Gastrocnemius medialis (tissue), 4 donors: ENCODE measurements at regions of chr14 and their contacts with region 1.

Region 1: GRCh38 chr14:77097700-77098528 is at the start of gene CIPC:
- DNase-seq: peak; percentile 100
- ATAC-seq: peak; percentile 70 to 72
- H3K4me3 ChIP-seq: peak within 1 kb of the TSS; percentile 71 to 90 (median 85)
- H3K27ac ChIP-seq: peak within 1 kb of the TSS; percentile 93 to 99 (median 98)
- H3K4me1 ChIP-seq: peaks cover 54 to 58% of the 10 kb centered on the region in 2 donors
- H3K27me3 ChIP-seq: no peaks in the 10 kb centered on the region
- CTCF ChIP-seq: no peak
- POLR2A ChIP-seq: peak; percentile 89 to 94
- total RNA-seq, gene CIPC: 114 to 178 (median 120) TPM

Region 2: DNA sequence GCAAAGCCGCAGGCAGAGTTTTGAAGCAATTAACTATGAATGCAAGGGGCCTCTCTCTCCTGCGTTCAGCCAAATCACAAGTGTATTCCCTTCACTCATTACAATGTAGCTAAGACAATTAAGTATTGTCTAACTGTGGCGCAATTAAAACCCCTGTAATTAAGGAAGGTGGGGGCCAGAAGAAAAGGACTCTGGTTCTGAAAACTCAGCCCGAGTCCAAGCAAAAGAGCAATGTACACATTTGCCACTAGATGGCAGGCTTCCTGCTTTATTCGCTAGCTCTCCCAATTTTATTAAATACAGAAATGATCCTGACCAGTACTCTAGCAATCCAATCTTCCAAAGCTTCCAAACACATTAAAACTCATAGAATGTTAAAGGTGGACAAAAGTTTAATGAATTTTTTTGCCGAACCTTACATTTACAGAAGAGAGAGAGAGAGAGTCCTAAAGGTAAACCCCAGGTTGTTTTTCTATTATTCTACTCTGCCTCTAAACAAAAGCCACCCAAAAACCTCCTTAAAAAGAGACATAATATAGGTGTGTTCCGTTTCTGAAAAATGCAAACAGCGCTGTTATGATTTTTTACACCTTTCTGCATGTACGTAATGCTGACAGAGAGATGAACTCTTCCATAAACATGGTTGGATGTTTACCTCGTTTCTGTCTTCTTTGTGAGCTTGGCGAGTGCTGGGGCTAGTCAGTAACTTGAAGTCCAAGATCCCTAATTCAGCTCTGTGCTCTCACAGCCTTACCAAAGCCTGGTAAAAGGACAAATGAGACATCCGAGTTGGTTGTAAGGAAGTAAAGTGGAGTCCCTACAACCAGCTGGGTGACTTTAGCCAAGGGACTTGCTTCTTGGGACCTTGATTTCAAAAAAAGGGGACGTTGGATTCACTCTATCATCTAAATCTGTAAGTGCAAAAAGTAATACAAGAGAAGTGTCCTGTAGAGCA is 387.6 kb before region 1 on chr14:
- in situ Hi-C with region 1: loop called in 1 of 4 experiments (anchors 25 kb)
- intact Hi-C with region 1: no loop called
- DNase-seq: no peak
- ATAC-seq: peak; percentile 54 to 58
- H3K4me3 ChIP-seq: no peak overlapping the region
- H3K27ac ChIP-seq: no peak overlapping the region
- H3K4me1 ChIP-seq: no peaks in the 10 kb centered on the region
- H3K27me3 ChIP-seq: no peaks in the 10 kb centered on the region
- CTCF ChIP-seq: peak; percentile 49 to 80 (median 70)
- POLR2A ChIP-seq: no peak

Region 3: GRCh38 chr14:76876076-76876475 is 221.8 kb before region 1 on chr14:
- in situ Hi-C with region 1: no loop called
- intact Hi-C with region 1: loop called (anchors 1 kb)
- DNase-seq: peak; percentile 31 to 51
- ATAC-seq: peak; percentile 84 to 87
- H3K4me3 ChIP-seq: no peak overlapping the region
- H3K27ac ChIP-seq: no peak overlapping the region
- H3K4me1 ChIP-seq: no peaks in the 10 kb centered on the region
- H3K27me3 ChIP-seq: no peaks in the 10 kb centered on the region
- CTCF ChIP-seq: peak; percentile 86 to 95 (median 90)
- POLR2A ChIP-seq: no peak

Region 4: GRCh38 chr14:77028384-77029231 is 69.3 kb before region 1 on chr14 and contains the start of gene IRF2BPL:
- in situ Hi-C with region 1: no loop called
- intact Hi-C with region 1: loop called (anchors 1 kb)
- DNase-seq: peak; percentile 98 to 99
- ATAC-seq: peak; percentile 56 to 59
- H3K4me3 ChIP-seq: peak within 1 kb of the TSS; percentile 53 to 94 (median 88)
- H3K27ac ChIP-seq: peak within 1 kb of the TSS; percentile 95 to 100 (median 100)
- H3K4me1 ChIP-seq: peaks cover 59 to 65% of the 10 kb centered on the region in 2 donors
- H3K27me3 ChIP-seq: no peaks in the 10 kb centered on the region
- CTCF ChIP-seq: no peak
- POLR2A ChIP-seq: peak; percentile 94 to 95
- total RNA-seq, gene IRF2BPL: 15.0 to 26.4 (median 17.0) TPM

Region 5: DNA sequence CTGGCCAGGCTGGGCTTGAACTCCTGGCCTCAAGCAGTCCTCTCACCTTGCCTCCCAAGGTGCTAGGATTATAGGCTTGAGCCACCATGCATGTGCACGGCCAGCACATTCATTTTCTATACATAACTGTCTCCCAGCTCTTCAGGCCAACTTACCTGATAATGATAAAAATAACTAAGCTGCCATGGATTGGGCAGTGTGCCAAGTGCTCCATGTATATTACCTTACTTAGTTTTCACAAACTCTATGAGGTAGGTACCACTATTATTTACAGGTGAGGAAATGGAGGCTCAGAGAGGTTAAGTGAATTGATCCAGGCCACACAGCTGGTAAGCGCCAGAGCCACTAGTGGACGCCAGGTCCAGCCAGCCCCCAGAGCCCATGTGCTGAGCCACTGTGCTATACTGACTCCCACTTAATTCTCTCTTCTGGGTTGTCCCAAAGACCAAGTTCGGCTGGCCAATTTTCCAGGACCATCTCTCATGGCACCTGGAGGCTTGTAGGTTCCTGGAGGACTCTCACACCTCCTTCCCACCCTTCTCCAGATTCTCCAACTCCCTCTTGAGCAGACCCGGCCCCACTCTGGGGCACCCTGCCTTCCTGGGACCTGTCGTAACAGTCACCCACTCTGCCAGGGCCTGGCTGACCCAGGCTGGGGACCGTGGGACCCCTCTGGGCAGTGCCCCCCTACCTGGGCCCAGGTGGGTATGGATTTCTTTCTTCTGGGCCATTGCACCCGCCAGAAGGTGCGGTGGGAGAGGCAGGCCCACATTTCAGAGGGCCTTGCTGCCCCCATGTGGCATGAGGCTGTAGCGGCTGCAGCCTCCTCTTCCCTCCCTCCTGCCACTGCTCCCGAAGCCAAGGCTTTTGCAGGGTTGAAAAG is 30.0 kb before region 1 on chr14:
- in situ Hi-C with region 1: no loop called
- intact Hi-C with region 1: loop called (anchors 1 kb)
- DNase-seq: peak; percentile 57 to 70
- ATAC-seq: peak; percentile 70 to 82
- H3K4me3 ChIP-seq: no peak overlapping the region
- H3K27ac ChIP-seq: peak overlapping the region; percentile 30 to 81 (median 47)
- H3K4me1 ChIP-seq: peaks cover 26 to 35% of the 10 kb centered on the region in 2 donors
- H3K27me3 ChIP-seq: no peaks in the 10 kb centered on the region
- CTCF ChIP-seq: peak; percentile 86 to 94 (median 92)
- POLR2A ChIP-seq: no peak

Region 6: DNA sequence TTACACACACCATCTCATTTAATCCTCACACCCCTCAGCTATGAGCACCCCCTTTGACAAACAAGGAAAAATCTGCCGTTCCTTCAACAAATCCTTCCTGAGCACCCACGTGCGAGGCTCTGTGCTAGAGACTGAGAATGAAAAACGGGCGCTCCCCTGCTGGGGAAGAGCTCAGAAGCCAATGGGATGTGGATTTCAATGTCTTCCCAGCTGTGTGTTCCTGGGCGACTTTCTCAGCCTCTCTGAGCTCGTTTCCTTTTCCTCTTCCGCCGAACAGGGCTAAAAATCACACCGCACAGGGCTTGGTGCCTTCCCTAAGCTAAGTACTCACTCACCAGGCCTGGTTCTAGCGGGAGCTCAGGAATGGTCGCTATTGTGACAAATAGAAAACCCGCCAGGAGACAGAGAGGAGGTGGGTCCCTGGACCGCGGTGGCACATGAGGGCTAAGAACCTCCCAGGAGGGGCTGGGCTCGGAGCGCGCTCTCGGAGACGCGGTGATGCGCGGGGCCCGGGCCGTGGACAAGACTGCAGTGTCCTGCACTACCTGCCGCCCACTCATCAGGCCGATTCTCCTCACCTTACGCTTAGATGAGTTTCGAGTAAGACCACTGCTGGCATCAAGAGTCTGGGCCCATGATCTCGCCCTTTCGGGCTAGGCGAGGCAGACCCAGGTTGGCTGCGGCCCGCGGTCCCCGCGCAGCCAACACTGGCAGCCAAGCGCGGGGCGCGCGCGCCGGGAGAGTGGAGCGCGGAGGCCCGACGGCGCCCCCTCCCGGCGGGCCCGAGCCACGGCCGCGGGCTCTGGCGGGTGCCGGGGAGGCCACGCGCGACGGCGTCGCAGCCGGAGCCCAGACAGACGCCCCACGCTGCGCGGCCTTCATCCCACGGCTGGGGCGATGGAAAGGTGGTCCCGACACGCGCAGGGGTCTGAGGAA is 26.7 kb after region 1 on chr14:
- in situ Hi-C with region 1: no loop called
- intact Hi-C with region 1: loop called (anchors 1 kb)
- DNase-seq: peak in 1 of 2 donors; percentile 46
- ATAC-seq: peak; percentile 57 to 64
- H3K4me3 ChIP-seq: peak overlapping the region; percentile 41 to 63 (median 52)
- H3K27ac ChIP-seq: peak overlapping the region; percentile 41 to 99 (median 90)
- H3K4me1 ChIP-seq: peaks cover 48 to 53% of the 10 kb centered on the region in 2 donors
- H3K27me3 ChIP-seq: no peaks in the 10 kb centered on the region
- CTCF ChIP-seq: peak in 4 of 5 experiments; percentile 93 to 96 (median 94)
- POLR2A ChIP-seq: no peak

Region 7: DNA sequence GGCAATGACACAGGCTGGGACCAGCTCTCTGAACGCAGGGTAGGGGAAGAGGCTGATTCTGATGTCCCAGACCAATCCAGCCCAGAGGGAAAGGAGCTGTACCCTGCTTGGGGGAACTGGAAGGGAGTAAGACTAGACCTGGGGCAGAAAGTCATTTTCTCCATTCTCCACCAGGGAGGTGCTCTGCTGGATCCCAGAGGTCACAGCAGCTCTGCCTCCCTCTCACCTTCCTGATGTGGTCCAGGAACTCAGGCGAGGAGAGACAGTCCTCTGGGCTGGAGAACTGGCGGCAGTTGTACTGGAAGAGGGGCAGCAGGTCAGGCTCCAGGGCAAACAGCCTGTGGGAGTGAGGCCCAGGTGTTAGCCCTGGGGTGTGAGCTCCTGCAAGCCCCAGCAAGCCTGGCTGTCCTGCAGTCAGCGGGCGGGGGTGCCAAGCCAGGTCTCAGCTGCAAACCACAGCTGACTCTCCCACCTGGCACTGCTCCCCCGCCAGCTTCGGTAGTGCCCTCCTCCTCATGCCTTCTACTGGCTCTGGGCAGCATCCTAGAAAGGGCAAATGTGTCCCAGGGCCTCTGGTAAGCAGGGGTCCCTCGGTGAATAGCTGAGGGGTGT is 171.2 kb after region 1 on chr14:
- in situ Hi-C with region 1: no loop called
- intact Hi-C with region 1: no loop called
- DNase-seq: no peak
- ATAC-seq: no peak
- H3K4me3 ChIP-seq: no peak overlapping the region
- H3K27ac ChIP-seq: no peak overlapping the region
- H3K4me1 ChIP-seq: no peaks in the 10 kb centered on the region
- H3K27me3 ChIP-seq: peaks cover 31 to 48% (median 39%) of the 10 kb centered on the region in 3 donors
- CTCF ChIP-seq: no peak
- POLR2A ChIP-seq: no peak

Region 8: DNA sequence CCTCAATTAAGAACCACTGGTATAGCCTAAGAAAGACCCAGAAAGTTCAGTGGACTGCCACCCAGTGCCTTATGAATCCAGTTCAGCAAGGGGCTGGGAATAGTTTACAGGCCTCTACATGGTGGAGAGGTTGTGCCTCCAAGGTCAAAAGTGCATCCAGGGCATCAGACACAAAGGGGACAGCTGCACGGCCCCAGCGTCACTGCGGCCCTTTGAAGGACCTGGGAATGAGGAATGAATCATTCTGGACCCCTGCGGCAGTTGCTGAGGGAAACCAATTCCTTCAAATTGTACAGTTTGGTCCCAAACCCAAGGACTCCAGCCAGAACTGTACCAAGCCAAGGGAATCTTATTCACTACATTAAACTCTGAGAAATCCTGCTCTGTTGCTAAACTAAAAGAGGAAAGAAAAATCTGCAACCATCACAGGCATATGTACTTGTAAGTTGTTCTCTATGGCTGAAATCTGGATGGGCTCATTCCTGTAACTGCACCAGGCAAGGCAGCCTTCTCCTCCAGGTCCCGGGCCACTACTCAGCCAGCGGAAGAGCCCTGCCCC is 184.0 kb after region 1 on chr14:
- in situ Hi-C with region 1: no loop called
- intact Hi-C with region 1: no loop called
- DNase-seq: no peak
- ATAC-seq: no peak
- H3K4me3 ChIP-seq: no peak overlapping the region
- H3K27ac ChIP-seq: no peak overlapping the region
- H3K4me1 ChIP-seq: no peaks in the 10 kb centered on the region
- H3K27me3 ChIP-seq: no peaks in the 10 kb centered on the region
- CTCF ChIP-seq: no peak
- POLR2A ChIP-seq: no peak

Region 9: GRCh38 chr14:77320238-77320935 is 222.5 kb after region 1 on chr14 and contains the start of gene POMT2:
- in situ Hi-C with region 1: loop called in 3 of 4 experiments (anchors 10 kb)
- intact Hi-C with region 1: loop called (anchors 1 kb)
- DNase-seq: peak; percentile 94
- ATAC-seq: peak; percentile 56 to 63
- H3K4me3 ChIP-seq: peak within 1 kb of the TSS; percentile 79 to 100 (median 82)
- H3K27ac ChIP-seq: peak within 1 kb of the TSS; percentile 95 to 99 (median 97)
- H3K4me1 ChIP-seq: peaks cover 47 to 49% of the 10 kb centered on the region in 2 donors
- H3K27me3 ChIP-seq: no peaks in the 10 kb centered on the region
- CTCF ChIP-seq: peak in 4 of 5 experiments; percentile 50 to 82 (median 70)
- POLR2A ChIP-seq: peak; percentile 89 to 90
- total RNA-seq, gene POMT2: 27.0 to 33.2 (median 28.9) TPM

Region 10: GRCh38 chr14:77825895-77826519 is 728.1 kb after region 1 on chr14:
- in situ Hi-C with region 1: no loop called
- intact Hi-C with region 1: no loop called
- DNase-seq: no peak
- ATAC-seq: no peak
- H3K4me3 ChIP-seq: no peak overlapping the region
- H3K27ac ChIP-seq: no peak overlapping the region
- H3K4me1 ChIP-seq: no peaks in the 10 kb centered on the region
- H3K27me3 ChIP-seq: no peaks in the 10 kb centered on the region
- CTCF ChIP-seq: no peak
- POLR2A ChIP-seq: no peak